ENCODE measurements at regions of chr2 and their contacts with region 1.

Region 1: GRCh38 chr2:219119422-219120043 is 41.1 kb downstream of the NHEJ1 start:
- DNase-seq: peak; percentile 75
- H3K4me3 Mint-ChIP-seq: no peak overlapping the region
- H3K27ac Mint-ChIP-seq: no peak overlapping the region
- H3K4me1 Mint-ChIP-seq: peaks cover 15% of the 10 kb centered on the region
- H3K27me3 Mint-ChIP-seq: no peaks in the 10 kb centered on the region
- CTCF ChIP-seq: peak; percentile 74

Region 2: DNA sequence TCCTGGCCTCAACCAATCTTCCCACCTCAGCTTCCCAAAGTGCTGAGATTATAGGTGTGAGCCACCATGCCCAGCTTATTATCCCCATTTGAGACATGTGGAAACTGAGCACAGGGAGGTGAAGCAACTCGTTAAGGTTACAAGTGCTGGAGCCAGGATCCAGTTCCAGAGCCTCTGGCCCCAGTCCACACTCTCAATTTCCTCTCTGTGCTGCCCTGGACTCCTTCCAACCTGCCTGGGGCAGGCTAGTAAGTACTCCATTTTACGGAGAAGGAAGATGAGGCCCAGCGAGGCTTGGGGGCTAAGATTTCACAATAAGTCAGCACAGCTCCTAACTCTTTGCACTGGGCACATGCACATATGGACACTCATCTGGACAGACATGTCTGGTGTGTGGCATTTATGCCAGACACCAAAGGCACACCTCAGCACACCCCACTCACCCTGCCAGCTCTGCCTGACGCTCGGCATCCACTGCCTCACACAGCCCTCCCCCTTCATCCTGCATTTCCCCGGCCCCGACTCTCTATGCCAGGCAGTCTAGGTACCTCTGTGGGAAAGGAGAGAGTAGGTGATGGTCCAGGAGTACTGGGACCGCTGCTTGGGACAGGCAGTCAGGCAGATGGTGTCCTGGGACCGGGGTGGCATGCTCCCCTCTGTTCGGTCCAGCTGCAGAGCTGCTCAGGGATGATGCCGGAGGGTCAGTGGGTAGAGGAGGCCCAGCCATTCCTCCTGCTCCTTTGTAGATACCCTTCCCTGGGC is 98.7 kb before region 1 on chr2:
- CTCF ChIA-PET with region 1: interaction called, 11 read pairs
- POLR2A ChIA-PET with region 1: no interaction called
- intact Hi-C with region 1: no loop called
- DNase-seq: peak; percentile 61
- H3K4me3 Mint-ChIP-seq: no peak overlapping the region
- H3K27ac Mint-ChIP-seq: no peak overlapping the region
- H3K4me1 Mint-ChIP-seq: no peaks in the 10 kb centered on the region
- H3K27me3 Mint-ChIP-seq: no peaks in the 10 kb centered on the region
- CTCF ChIP-seq: no peak

Region 3: DNA sequence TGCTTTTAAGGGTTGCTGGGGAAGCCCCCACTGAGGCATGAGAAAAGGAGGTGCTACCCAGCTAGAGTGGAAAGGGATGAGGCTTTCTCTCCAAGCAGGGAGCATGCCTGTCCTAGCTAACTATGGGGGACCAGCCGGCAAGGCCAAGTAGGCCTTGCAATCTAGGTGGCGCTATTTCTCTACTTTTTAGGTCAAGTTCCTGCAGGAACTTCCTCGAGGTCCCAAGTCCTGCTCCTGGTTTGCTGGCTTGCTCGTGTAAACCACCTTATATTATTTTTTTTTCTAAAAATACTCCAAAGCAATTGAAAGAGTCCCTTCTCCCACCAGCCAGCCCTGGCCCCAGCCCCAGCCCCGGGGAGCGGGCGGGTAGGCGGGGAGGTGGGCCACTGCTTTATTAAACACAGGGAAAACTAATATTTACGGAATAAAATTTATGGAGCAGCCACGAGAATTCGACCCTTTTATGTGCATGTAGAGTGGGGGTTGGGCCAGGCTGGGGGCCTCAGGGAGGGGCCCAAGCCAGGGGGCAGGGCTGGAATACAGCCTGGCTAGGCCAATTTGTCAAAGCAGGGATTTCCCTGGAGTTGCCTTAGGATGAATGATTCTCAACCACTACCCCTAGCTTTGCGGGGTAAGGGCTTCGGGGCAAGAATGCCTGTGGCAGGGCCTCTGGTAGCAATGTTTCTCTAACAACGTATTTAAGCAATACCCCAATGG is 46.0 kb before region 1 on chr2:
- CTCF ChIA-PET with region 1: interaction called, 34 read pairs
- POLR2A ChIA-PET with region 1: interaction called, 3 read pairs
- intact Hi-C with region 1: loop called (anchors 5 kb)
- DNase-seq: peak; percentile 57
- H3K4me3 Mint-ChIP-seq: no peak overlapping the region
- H3K27ac Mint-ChIP-seq: peak overlapping the region; percentile 7
- H3K4me1 Mint-ChIP-seq: peaks cover 13% of the 10 kb centered on the region
- H3K27me3 Mint-ChIP-seq: no peaks in the 10 kb centered on the region
- CTCF ChIP-seq: peak; percentile 57

Region 4: GRCh38 chr2:219095406-219095935 is 24.1 kb before region 1 on chr2:
- CTCF ChIA-PET with region 1: interaction called, 15 read pairs
- POLR2A ChIA-PET with region 1: no interaction called
- intact Hi-C with region 1: no loop called
- DNase-seq: no peak
- H3K4me3 Mint-ChIP-seq: no peak overlapping the region
- H3K27ac Mint-ChIP-seq: no peak overlapping the region
- H3K4me1 Mint-ChIP-seq: no peaks in the 10 kb centered on the region
- H3K27me3 Mint-ChIP-seq: no peaks in the 10 kb centered on the region
- CTCF ChIP-seq: no peak

Region 5: DNA sequence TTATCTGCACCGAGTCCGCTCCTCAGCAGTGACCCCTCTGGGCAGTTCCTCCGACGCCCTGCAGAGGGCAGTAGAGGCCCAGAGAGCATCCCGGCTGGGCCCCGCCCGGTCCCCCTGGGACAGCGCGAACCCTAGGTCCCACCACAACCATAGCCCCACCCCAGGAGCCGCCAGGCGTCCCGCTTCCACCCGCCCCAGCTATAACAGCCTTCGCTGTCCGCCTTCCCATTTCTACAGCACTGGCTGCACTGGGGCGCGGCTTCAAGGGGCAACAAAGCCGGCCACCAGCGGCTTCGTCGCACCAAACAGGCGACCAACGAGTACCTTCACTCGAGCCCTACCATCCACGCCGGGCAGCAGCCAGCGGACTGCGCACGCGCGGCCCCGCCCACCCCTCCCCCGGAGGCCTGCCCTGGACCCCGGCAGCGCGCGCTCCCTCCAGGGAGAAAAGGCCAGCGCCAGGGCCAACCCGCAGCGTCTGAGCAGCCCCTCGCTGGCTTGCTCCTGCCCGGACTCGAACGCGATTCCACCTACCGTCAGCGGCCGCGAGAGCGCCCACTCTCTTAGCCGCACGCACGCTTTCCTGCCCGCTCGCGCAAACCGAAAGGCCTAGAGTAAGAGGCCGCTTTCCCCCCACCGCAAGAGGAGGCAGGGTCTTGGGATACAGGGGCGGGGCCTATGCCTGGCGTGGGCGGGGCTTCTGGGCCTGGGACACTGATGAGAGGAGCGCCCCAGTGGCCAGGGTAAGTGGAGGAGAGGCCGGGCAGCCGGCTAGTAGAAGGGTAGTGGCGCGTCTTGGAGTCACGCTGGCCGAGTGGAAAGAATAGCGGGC is 40.9 kb after region 1 on chr2 and contains the start of gene NHEJ1:
- CTCF ChIA-PET with region 1: interaction called, 11 read pairs
- POLR2A ChIA-PET with region 1: interaction called, 5 read pairs
- intact Hi-C with region 1: loop called (anchors 1 kb)
- DNase-seq: peak; percentile 95
- H3K4me3 Mint-ChIP-seq: peak within 1 kb of the TSS; percentile 77
- H3K27ac Mint-ChIP-seq: peak within 1 kb of the TSS; percentile 37
- H3K4me1 Mint-ChIP-seq: peaks cover 14% of the 10 kb centered on the region
- H3K27me3 Mint-ChIP-seq: no peaks in the 10 kb centered on the region
- CTCF ChIP-seq: peak; percentile 96
- total RNA-seq, gene NHEJ1: 7.5 and 11.5 TPM in 2 replicates

Region 6: GRCh38 chr2:219177552-219178376 is 58.2 kb after region 1 on chr2 and contains the start of gene RETREG2:
- CTCF ChIA-PET with region 1: no interaction called
- POLR2A ChIA-PET with region 1: no interaction called
- intact Hi-C with region 1: no loop called
- DNase-seq: peak; percentile 90
- H3K4me3 Mint-ChIP-seq: peak within 1 kb of the TSS; percentile 82
- H3K27ac Mint-ChIP-seq: peak within 1 kb of the TSS; percentile 93
- H3K4me1 Mint-ChIP-seq: no peaks in the 10 kb centered on the region
- H3K27me3 Mint-ChIP-seq: no peaks in the 10 kb centered on the region
- CTCF ChIP-seq: peak; percentile 32
- total RNA-seq, gene RETREG2: 49.3 and 64.5 TPM in 2 replicates